K562 (cell line): ENCODE measurements at regions of chr1 and their contacts with region 1.

Region 1: GRCh38 chr1:13960375-13960987 is 260.5 kb downstream of the PRDM2 start:
- DNase-seq: peak; percentile 73 to 85 (median 81)
- ATAC-seq: peak; percentile 92
- H3K4me3 ChIP-seq: no peak overlapping the region
- H3K27ac ChIP-seq: no peak overlapping the region
- H3K4me1 ChIP-seq: no peaks in the 10 kb centered on the region
- H3K27me3 ChIP-seq: peaks cover 2 to 9% of the 10 kb centered on the region in 2 experiments; a peak in 2 of 5 replicates
- CTCF ChIP-seq: peak; percentile 91 to 97 (median 96)
- EP300 ChIP-seq: no peak
- POLR2A ChIP-seq: no peak
- RAD21 ChIP-seq: peak; percentile 85 to 94

Region 2: GRCh38 chr1:13662493-13662892 is 298.0 kb before region 1 on chr1:
- CTCF ChIA-PET with region 1: interaction called, 23 read pairs
- POLR2A ChIA-PET with region 1: no interaction called
- in situ Hi-C with region 1: loop called (anchors 5 kb)
- intact Hi-C with region 1: loop called (anchors 1 kb)
- DNase-seq: no peak
- ATAC-seq: no peak
- H3K4me3 ChIP-seq: no peak overlapping the region
- H3K27ac ChIP-seq: no peak overlapping the region
- H3K4me1 ChIP-seq: no peaks in the 10 kb centered on the region
- H3K27me3 ChIP-seq: peaks cover 10 to 15% of the 10 kb centered on the region in 2 experiments; a peak in 4 of 5 replicates
- CTCF ChIP-seq: no peak
- EP300 ChIP-seq: no peak
- POLR2A ChIP-seq: no peak
- RAD21 ChIP-seq: no peak

Region 3: DNA sequence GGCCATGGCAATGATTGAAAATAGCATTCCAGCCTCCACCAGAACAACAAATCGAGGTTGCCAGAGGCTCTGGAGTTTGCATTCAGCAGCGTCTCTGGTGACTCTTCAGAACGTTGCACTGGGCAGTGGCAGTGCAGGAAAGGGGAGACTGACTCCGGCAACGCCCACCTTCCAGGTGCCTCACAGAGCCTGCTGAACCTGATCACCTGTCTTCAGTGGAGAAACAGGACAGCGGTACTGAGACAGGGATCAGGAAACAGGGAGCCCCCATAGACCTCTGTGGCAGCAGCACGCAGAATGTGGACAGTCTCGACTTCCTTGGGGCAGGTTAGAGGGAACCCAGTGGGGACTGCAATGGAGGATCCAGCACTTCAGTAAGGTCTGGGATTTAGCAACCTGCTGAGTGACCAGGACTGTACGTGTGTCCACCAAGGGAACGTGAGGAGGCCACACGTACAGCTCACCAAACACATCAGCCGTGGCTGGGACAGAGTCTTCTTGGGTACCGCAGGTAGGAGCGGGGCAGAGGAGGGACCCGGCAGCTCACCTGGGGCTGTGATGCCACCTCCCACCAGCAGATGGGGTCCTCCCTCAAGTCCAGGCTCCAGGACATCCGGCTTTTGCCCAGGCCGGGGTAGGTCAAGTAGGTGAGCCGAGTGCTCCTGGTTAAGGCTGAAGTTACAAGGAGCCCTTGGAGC is 131.9 kb before region 1 on chr1:
- CTCF ChIA-PET with region 1: interaction called, 3 read pairs
- POLR2A ChIA-PET with region 1: no interaction called
- in situ Hi-C with region 1: no loop called
- intact Hi-C with region 1: loop called (anchors 1 kb)
- DNase-seq: peak; percentile 64 to 82 (median 78)
- ATAC-seq: peak; percentile 97
- H3K4me3 ChIP-seq: no peak overlapping the region; the same call in 1 of the 2 replicates
- H3K27ac ChIP-seq: no peak overlapping the region
- H3K4me1 ChIP-seq: no peaks in the 10 kb centered on the region; a peak in 1 of 5 replicates
- H3K27me3 ChIP-seq: peaks cover 17 to 49% of the 10 kb centered on the region in 2 experiments
- CTCF ChIP-seq: peak; percentile 71 to 88 (median 80)
- EP300 ChIP-seq: no peak
- POLR2A ChIP-seq: no peak
- RAD21 ChIP-seq: peak; percentile 16 to 71; a peak in 2 of 4 replicates

Region 4: DNA sequence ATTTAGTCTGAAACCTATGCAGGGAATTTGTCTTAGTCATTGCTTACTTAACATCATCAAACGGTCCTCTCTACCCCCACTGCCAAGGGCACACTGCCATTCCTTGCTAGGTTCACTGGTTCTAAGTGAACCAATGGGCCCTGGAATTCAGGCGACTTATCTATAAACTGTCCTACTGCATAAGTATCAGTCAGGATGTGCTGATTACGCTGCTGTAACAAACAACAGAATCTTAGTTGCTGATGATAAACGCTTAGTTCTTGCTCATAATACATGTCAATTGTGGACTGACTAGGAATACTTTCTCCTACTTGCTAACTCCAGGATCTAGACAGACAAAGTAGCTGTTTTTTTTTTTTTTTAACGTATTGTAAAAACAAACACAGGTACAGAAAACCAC is 124.3 kb before region 1 on chr1:
- CTCF ChIA-PET with region 1: interaction called, 3 read pairs
- POLR2A ChIA-PET with region 1: no interaction called
- in situ Hi-C with region 1: loop called (anchors 5 kb)
- intact Hi-C with region 1: no loop called
- DNase-seq: peak in 3 of 4 experiments; percentile 4 to 5 (median 4)
- ATAC-seq: no peak
- H3K4me3 ChIP-seq: no peak overlapping the region
- H3K27ac ChIP-seq: no peak overlapping the region
- H3K4me1 ChIP-seq: no peaks in the 10 kb centered on the region
- H3K27me3 ChIP-seq: peaks cover 8 to 21% of the 10 kb centered on the region in 2 experiments; a peak in 3 of 5 replicates
- CTCF ChIP-seq: no peak
- EP300 ChIP-seq: no peak
- POLR2A ChIP-seq: no peak
- RAD21 ChIP-seq: no peak

Region 5: GRCh38 chr1:13930151-13930550 is 30.3 kb before region 1 on chr1:
- CTCF ChIA-PET with region 1: interaction called, 7 read pairs
- POLR2A ChIA-PET with region 1: no interaction called
- in situ Hi-C with region 1: no loop called
- intact Hi-C with region 1: loop called (anchors 1 kb)
- DNase-seq: peak; percentile 37 to 52 (median 48)
- ATAC-seq: peak; percentile 77
- H3K4me3 ChIP-seq: no peak overlapping the region
- H3K27ac ChIP-seq: no peak overlapping the region
- H3K4me1 ChIP-seq: no peaks in the 10 kb centered on the region
- H3K27me3 ChIP-seq: peaks cover 11 to 13% of the 10 kb centered on the region in 2 experiments
- CTCF ChIP-seq: peak; percentile 60 to 76 (median 62)
- EP300 ChIP-seq: no peak
- POLR2A ChIP-seq: no peak
- RAD21 ChIP-seq: peak; percentile 29 to 38; a peak in 3 of 4 replicates

Region 6: GRCh38 chr1:13981142-13981541 is 20.7 kb after region 1 on chr1:
- CTCF ChIA-PET with region 1: no interaction called
- POLR2A ChIA-PET with region 1: no interaction called
- in situ Hi-C with region 1: no loop called
- intact Hi-C with region 1: no loop called
- DNase-seq: no peak
- ATAC-seq: no peak
- H3K4me3 ChIP-seq: no peak overlapping the region
- H3K27ac ChIP-seq: no peak overlapping the region
- H3K4me1 ChIP-seq: peaks cover 0 to 6% of the 10 kb centered on the region in 2 experiments; a peak in 1 of 5 replicates
- H3K27me3 ChIP-seq: peaks cover 0 to 2% of the 10 kb centered on the region in 2 experiments; a peak in 1 of 5 replicates
- CTCF ChIP-seq: no peak
- EP300 ChIP-seq: no peak
- POLR2A ChIP-seq: no peak
- RAD21 ChIP-seq: no peak

Region 7: GRCh38 chr1:15046487-15047165 is 1086.1 kb after region 1 on chr1:
- CTCF ChIA-PET with region 1: no interaction called
- POLR2A ChIA-PET with region 1: no interaction called
- in situ Hi-C with region 1: loop called (anchors 10 kb)
- intact Hi-C with region 1: loop called (anchors 10 kb)
- DNase-seq: peak; percentile 83 to 91 (median 88)
- ATAC-seq: peak; percentile 96
- H3K4me3 ChIP-seq: no peak overlapping the region
- H3K27ac ChIP-seq: no peak overlapping the region
- H3K4me1 ChIP-seq: no peaks in the 10 kb centered on the region
- H3K27me3 ChIP-seq: no peaks in the 10 kb centered on the region
- CTCF ChIP-seq: peak; percentile 89 to 96 (median 93)
- EP300 ChIP-seq: no peak
- POLR2A ChIP-seq: no peak
- RAD21 ChIP-seq: peak; percentile 87 to 96